K562 (cell line): ENCODE measurements at regions of chr1 and their contacts with region 1.

Region 1: DNA sequence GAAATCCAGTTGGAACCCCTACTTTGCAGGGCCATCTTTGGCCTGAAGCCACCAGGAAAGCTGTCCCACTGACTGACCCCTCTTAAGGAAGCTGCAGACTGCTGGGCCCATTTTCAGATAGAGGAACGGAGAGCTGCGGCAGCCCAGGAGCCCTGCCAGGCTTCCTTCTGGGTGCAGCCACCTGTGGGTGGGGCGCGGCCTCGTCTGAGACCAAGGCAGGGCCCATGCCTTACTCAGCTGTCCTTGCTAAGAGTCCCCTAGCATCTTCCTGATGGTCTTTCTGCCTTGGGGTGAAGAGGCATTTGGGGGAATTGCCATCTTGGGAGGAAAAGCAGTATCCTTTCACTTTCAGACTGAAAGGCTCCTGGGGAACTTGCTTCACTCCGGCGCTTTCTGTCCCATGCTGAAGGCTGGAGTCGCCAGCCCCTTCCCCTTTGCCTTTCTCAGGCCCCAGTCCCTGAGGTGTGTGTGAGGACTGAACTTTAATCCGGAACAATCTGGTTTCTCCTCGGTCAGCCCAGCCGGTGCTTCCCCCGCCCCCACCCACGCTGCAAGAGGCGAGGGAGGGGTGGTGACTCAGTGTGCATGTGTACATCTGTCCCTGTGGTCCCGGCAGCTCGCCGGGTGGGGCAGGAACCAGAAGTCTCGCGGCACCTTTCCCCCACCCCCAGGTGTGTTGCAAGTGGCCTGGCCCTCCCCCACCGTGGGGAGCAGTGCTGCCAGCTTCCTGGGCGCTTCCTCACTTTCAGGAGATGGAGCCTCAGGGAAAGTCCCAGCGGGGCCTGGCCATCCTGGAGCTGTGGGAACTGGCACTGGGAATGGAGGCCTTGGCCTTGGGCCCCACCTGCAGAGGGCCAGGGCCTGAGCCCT is 5.1 kb downstream of the ZC3H12A start:
- DNase-seq: peak; percentile 92 to 97 (median 94)
- ATAC-seq: peak; percentile 85
- H3K4me3 ChIP-seq: peak overlapping the region; percentile 35
- H3K27ac ChIP-seq: peak overlapping the region; percentile 94
- H3K4me1 ChIP-seq: peaks cover 52 to 74% of the 10 kb centered on the region in 2 experiments
- H3K27me3 ChIP-seq: no peaks in the 10 kb centered on the region
- CTCF ChIP-seq: no peak
- EP300 ChIP-seq: peak; percentile 73
- POLR2A ChIP-seq: peak; percentile 65
- RAD21 ChIP-seq: no peak

Region 2: GRCh38 chr1:37493336-37494098 is 14.0 kb after region 1 on chr1:
- CTCF ChIA-PET with region 1: no interaction called
- POLR2A ChIA-PET with region 1: interaction called, 118 read pairs
- in situ Hi-C with region 1: no loop called
- intact Hi-C with region 1: no loop called
- DNase-seq: no peak
- ATAC-seq: no peak
- H3K4me3 ChIP-seq: no peak overlapping the region
- H3K27ac ChIP-seq: no peak overlapping the region
- H3K4me1 ChIP-seq: no peaks in the 10 kb centered on the region; a peak in 1 of 5 replicates
- H3K27me3 ChIP-seq: no peaks in the 10 kb centered on the region
- CTCF ChIP-seq: no peak
- EP300 ChIP-seq: no peak
- POLR2A ChIP-seq: no peak
- RAD21 ChIP-seq: no peak

Region 3: DNA sequence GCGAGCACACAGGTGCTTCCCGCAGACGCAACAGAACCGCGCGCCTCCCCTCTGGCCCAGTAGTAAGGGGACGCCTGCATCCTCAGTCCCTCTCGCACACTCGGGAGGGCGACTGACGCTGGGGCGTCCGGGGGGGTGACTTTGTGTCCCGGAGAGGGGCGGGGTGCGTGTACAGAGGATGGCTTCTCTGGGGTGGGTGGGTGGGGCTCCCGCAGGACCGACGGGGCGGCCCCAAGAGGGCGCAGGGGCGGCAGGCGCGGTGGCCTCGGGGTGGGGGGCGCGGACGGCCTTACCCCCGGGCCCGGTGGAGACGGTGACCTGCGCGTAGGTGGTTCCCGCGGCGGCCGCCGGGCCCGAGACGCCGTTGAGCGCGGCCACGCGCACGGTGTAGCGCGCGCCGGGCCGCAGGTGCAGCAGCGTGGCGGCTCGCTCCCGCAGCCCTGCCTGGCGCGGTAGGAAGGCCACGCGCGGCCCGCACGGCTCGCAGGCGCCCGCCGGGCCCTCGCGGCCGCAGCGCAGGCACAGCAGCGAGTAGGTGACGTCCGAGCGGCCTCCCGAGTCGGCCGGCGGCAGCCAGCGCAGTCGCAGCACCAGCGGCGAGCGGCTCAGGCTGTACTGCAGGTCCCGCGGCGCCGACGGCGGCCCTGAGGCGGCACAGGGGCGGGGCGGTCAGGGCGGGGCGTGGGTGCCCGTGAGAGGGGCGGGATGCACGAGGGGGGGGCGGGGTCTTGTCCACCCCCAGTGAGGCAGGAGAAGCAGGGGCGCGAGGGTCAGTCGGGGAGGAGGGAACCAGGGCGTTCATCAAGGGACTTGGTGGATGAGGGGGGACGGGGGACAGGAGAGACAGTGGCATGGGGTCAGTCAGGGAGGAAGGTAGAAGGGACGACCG is 273.3 kb after region 1 on chr1:
- CTCF ChIA-PET with region 1: no interaction called
- POLR2A ChIA-PET with region 1: no interaction called
- in situ Hi-C with region 1: no loop called
- intact Hi-C with region 1: no loop called
- DNase-seq: peak; percentile 36 to 78 (median 62)
- ATAC-seq: peak; percentile 82
- H3K4me3 ChIP-seq: peak overlapping the region; percentile 8; the same call in 1 of the 2 replicates
- H3K27ac ChIP-seq: no peak overlapping the region
- H3K4me1 ChIP-seq: peaks cover 0 to 12% of the 10 kb centered on the region in 2 experiments; a peak in 2 of 5 replicates
- H3K27me3 ChIP-seq: peaks cover 22 to 39% of the 10 kb centered on the region in 2 experiments
- CTCF ChIP-seq: no peak
- EP300 ChIP-seq: no peak
- POLR2A ChIP-seq: no peak
- RAD21 ChIP-seq: no peak